SK-N-SH (cell line): ENCODE measurements at regions of chr22 and their contacts with region 1.

Region 1: GRCh38 chr22:33049119-33049729 is 9.0 kb downstream of the SYN3 start:
- DNase-seq: peak; percentile 78
- H3K4me3 ChIP-seq: no peak overlapping the region; a peak in 1 of 4 replicates
- H3K27ac ChIP-seq: no peak overlapping the region
- H3K4me1 ChIP-seq: no peaks in the 10 kb centered on the region
- H3K27me3 ChIP-seq: no peaks in the 10 kb centered on the region
- CTCF ChIP-seq: peak; percentile 86
- EP300 ChIP-seq: no peak
- RAD21 ChIP-seq: peak; percentile 72

Region 2: DNA sequence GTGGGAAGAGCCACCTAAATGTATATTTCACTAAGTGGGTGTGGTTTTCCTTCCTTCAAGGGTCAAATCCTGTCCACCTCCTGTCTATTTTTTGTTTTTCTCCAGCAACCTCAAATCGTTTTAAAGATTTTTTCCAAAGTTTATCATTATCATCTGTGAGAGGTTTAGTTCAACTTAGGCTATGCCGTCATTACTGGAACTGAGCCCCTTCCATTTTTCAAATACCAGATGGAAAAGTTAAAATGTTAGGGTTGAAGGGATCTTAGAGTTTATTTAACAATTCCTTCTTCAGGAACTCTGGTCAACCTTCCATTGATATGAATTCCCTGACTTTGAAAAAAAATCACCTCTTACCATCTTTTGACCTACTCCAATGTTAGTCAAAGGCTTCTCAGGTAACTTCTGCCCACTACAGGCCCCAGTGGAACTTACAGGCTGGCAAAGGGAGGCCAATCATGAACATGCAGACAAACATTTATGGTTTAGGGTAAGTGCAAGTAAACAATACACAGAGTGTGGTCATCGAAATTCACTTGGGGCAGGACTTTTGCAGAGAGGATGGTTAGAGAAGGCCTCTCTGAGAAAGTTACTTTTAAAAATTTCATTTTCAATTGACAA is 36.3 kb before region 1 on chr22:
- CTCF ChIA-PET with region 1: interaction called, 411 read pairs
- POLR2A ChIA-PET with region 1: no interaction called
- DNase-seq: no peak
- H3K4me3 ChIP-seq: no peak overlapping the region
- H3K27ac ChIP-seq: no peak overlapping the region
- H3K4me1 ChIP-seq: no peaks in the 10 kb centered on the region
- H3K27me3 ChIP-seq: no peaks in the 10 kb centered on the region
- CTCF ChIP-seq: no peak
- EP300 ChIP-seq: no peak
- RAD21 ChIP-seq: no peak

Region 3: DNA sequence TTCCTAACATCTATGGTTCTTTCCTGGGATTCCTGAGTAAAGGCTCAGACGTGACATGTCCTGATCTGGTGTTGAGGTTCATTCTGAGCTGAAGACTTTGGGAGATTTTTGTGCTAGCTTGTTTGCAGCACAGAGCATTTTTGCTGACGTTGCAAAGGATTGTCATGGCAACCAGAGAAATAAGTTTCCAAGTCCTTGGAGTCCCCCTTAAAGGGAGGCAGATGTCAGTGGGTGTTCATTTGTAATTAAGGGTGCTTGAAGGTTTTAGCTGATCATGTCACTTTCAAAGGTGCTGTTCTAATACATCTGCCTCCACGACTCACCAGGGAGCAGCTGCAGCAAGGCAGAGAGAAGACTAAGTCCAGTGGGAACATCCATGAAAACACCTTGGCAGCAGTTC is 14.4 kb after region 1 on chr22:
- CTCF ChIA-PET with region 1: interaction called, 92 read pairs
- POLR2A ChIA-PET with region 1: no interaction called
- DNase-seq: no peak
- H3K4me3 ChIP-seq: no peak overlapping the region
- H3K27ac ChIP-seq: no peak overlapping the region
- H3K4me1 ChIP-seq: no peaks in the 10 kb centered on the region; a peak in 1 of 4 replicates
- H3K27me3 ChIP-seq: no peaks in the 10 kb centered on the region
- CTCF ChIP-seq: no peak
- EP300 ChIP-seq: no peak
- RAD21 ChIP-seq: no peak

Region 4: GRCh38 chr22:33105501-33105911 is 56.3 kb after region 1 on chr22:
- CTCF ChIA-PET with region 1: interaction called, 14 read pairs
- POLR2A ChIA-PET with region 1: no interaction called
- DNase-seq: no peak
- H3K4me3 ChIP-seq: no peak overlapping the region
- H3K27ac ChIP-seq: no peak overlapping the region
- H3K4me1 ChIP-seq: peaks cover 0 to 9% of the 10 kb centered on the region in 2 experiments; a peak in 1 of 4 replicates
- H3K27me3 ChIP-seq: no peaks in the 10 kb centered on the region
- CTCF ChIP-seq: no peak
- EP300 ChIP-seq: no peak
- RAD21 ChIP-seq: no peak

Region 5: GRCh38 chr22:33126881-33127280 is 77.7 kb after region 1 on chr22:
- CTCF ChIA-PET with region 1: interaction called, 23 read pairs
- POLR2A ChIA-PET with region 1: no interaction called
- DNase-seq: peak; percentile 52
- H3K4me3 ChIP-seq: no peak overlapping the region
- H3K27ac ChIP-seq: no peak overlapping the region
- H3K4me1 ChIP-seq: no peaks in the 10 kb centered on the region
- H3K27me3 ChIP-seq: no peaks in the 10 kb centered on the region
- CTCF ChIP-seq: no peak
- EP300 ChIP-seq: no peak
- RAD21 ChIP-seq: peak; percentile 85